SK-N-SH (cell line): ENCODE measurements at regions of chr12 and their contacts with region 1.

Region 1: DNA sequence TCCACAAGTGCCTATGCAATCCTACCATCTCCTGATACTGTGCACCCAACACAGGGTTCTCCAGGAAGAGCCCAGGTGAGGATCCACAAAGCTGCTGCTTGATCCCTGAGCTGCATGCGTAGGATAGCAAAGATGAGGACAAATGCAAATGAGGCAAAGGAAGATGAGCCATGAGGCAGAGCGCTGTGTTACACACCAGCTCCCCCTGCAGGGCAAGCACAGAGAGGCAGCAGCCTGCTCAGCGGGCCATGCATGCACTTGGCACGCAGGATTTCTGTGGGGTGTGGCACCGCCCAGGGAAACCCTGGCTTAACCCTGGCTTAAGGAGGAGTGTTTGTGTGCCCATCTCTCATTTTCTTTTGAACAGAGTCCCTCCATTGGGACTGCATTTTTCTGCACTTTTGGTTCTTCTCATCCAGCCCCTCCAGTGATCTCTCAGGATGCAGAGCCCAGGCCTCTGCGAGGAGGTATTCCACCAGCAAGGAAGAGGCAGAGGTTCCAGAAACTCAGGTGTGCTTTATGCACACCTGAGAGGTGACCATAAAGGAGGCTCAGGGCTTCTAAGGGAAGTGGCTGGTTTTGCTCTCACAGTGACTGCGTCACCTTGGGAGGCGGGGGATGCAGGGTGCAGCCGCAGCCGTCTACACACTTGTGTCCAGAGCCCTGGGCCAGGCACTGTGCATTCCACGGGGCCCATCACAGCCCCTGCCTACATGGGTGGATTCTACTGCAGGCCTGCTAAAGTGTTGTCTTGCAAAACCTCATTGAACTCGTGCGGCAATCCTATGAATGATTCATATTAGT is 973.3 kb upstream of the TMEM132C start:
- DNase-seq: peak; percentile 63
- H3K4me3 ChIP-seq: no peak overlapping the region
- H3K27ac ChIP-seq: no peak overlapping the region
- H3K4me1 ChIP-seq: no peaks in the 10 kb centered on the region
- H3K27me3 ChIP-seq: no peaks in the 10 kb centered on the region
- CTCF ChIP-seq: peak; percentile 40
- EP300 ChIP-seq: no peak
- RAD21 ChIP-seq: peak; percentile 83

Region 2: DNA sequence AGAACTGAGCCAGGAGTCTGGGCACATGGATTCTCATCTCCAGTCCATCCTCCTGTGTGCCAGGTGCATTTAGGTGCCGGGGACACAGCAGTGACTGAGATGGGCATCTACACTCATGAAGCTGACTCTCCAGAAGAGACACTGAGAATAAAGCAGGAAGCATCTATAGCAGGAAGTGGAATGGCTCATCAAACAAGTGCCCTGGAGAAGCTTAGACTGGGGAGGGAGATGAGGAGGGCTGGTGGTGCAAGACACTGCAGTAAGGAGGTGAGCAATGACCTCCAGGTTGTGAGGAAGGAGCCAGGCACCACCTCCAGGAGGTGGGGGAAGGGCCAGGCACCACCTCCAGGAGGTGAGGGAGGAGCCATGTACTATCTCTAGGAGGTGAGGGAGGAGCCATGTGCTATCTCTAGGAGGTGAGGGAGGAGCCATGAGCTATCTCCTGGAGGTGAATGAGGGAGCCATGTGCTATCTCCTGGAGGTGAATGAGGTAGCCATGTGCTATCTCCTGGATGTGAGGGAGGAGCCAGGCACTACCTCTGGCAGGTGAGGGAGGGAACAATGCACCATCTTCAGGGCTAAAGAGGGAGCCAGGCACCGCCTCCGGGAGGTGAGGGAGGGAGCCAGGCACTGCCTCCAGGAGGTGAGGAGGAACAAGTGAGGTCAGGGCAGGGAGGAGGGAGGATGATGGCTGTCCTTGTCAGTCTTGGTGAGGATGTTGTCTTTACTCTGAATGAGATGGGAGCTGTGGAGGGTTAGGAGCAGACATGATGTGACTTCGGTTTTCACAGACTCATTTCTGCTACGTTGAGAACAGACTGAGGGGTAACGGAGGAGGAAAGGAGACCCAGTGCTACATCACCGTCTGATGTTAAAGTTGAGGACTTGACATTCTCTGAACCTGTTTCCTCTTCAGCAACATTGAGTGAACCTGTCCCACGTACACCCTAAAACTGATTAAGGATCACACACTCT is 11.3 kb after region 1 on chr12:
- CTCF ChIA-PET with region 1: interaction called, 13 read pairs
- POLR2A ChIA-PET with region 1: no interaction called
- DNase-seq: no peak
- H3K4me3 ChIP-seq: no peak overlapping the region
- H3K27ac ChIP-seq: no peak overlapping the region
- H3K4me1 ChIP-seq: no peaks in the 10 kb centered on the region
- H3K27me3 ChIP-seq: no peaks in the 10 kb centered on the region
- CTCF ChIP-seq: no peak
- EP300 ChIP-seq: no peak
- RAD21 ChIP-seq: no peak